OCI-LY7 (cell line): ENCODE measurements at regions of chrX and their contacts with region 1.

Region 1: GRCh38 chrX:119667111-119667878 is 25.7 kb downstream of the SEPTIN6 start:
- DNase-seq: no peak
- H3K4me3 ChIP-seq: no peak overlapping the region
- H3K27ac ChIP-seq: peak overlapping the region; percentile 85
- H3K4me1 ChIP-seq: peaks cover 40% of the 10 kb centered on the region
- CTCF ChIP-seq: no peak

Region 2: DNA sequence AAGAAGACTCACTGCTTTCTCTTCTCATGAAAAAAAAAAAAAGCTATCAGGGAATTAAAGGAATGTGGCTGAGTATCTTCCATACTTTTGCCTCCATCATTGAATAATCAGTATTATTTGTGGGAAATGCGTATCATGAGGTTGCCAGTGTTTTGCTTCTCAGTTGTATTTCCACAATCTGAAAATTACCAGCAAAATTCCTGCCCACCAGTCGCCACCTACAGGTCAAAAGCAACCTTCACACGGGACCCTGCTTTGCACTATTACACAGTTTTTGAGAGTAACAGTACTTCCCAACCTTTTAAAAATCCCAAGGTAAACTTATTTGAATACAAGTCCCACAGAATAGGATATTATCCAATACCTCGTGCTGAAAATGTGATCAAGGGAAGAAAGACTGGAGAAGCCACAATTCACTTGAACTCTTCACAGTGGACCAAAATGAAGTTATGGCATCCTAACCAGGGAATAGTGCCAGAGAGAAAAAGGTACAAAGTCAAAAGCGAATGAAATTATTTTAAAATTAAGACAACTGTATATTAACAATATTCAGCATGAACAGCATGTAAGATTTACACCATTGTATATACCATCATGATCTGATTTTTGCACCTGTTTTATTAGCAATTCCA is 400.8 kb before region 1 on chrX:
- CTCF ChIA-PET with region 1: no interaction called
- POLR2A ChIA-PET with region 1: no interaction called
- intact Hi-C with region 1: no loop called
- DNase-seq: peak; percentile 21
- H3K4me3 ChIP-seq: no peak overlapping the region
- H3K27ac ChIP-seq: no peak overlapping the region
- H3K4me1 ChIP-seq: no peaks in the 10 kb centered on the region
- CTCF ChIP-seq: peak; percentile 85

Region 3: DNA sequence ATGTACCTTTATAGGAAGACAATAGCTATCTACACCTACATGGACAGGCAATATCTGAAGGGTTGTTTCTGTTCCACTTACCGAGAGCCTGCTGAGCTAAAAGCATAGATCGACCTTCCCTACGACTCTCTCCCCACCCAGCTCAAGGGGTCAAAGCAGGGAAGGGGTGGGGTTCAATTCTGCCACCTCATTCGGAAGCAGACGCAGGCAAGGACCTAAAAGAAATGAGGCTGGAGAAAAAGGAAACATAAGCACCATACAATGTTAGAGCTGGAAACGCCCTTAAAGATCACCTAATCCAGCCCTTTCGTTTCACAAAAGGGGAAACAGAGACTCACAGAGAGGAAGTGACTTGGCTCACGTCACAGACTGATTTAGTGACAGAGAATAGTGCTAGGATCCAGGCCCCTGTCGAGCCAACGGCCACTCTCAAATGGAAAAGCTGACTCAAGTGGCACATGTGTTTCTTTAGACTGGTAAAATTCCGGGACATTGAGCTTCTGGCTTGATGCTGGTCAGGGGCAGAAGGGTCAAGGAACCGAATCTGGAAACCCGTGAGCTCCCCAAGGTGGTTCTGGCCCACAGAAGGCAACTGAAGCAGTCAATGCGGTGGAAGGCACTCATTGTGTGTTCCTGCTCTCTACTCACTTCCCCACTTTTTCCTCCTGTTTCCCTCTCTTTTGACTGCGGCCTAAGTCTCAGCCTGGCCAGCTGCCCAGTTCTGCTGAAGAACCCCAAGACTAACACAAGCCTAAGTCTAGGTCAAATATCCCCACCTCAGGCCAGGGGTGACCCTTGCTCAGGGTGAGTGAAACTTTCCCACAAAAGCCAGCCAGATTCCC is 18.2 kb after region 1 on chrX:
- CTCF ChIA-PET with region 1: interaction called, 6 read pairs
- POLR2A ChIA-PET with region 1: interaction called, 12 read pairs
- intact Hi-C with region 1: no loop called
- DNase-seq: peak; percentile 75
- H3K4me3 ChIP-seq: peak overlapping the region; percentile 63
- H3K27ac ChIP-seq: peak overlapping the region; percentile 100
- H3K4me1 ChIP-seq: peaks cover 97% of the 10 kb centered on the region
- CTCF ChIP-seq: no peak

Region 4: DNA sequence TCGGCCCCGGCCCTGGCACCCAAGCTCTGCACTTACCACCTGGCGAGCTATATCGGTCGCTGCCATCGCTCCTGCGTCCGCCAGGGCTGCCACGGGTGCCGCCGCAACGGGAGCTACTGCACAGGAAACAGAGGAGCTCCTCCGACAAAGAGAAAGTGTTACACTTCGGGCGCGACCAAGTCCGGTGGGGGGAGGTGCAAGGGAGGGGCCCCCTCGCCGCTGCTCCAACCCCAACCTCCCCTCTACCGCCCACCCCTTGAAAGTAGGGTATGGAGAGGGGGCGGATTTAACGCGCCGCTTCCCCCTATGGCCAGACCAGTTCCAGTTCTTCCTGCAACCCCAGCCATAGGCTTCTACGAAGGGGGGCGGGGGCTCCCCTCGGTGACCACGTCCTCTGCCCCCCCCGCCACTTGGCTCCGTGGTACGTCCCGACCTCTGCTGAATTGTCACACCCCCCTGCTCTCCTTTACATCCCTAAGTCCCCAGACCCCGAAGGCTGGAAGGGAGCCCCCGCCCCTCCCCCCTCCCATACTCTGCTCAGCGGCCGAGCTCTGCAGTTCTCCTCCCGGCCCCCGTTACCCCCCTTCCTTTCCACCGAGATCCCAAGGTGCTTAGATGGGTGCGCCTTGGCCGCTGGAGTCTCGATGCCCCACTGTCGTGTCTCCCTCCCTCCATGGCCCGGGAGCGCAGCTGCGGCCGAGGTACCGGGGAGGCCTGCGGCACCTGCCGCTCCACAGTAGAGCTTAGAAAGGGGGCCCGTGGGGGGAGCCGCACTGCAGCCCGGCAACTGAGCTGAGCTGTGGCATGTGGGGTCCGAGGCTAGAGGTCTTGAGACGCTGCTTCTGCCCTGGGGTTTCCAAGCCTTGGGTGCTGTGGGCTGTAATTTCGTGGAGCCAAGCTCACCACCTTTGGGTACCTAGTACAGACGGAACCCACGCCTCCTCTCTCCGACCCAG is 26.0 kb after region 1 on chrX and contains the start of gene SEPTIN6:
- CTCF ChIA-PET with region 1: interaction called, 6 read pairs
- POLR2A ChIA-PET with region 1: interaction called, 9 read pairs
- intact Hi-C with region 1: loop called (anchors 2 kb)
- DNase-seq: peak; percentile 90
- H3K4me3 ChIP-seq: peak within 1 kb of the TSS; percentile 94
- H3K27ac ChIP-seq: peak within 1 kb of the TSS; percentile 73
- H3K4me1 ChIP-seq: peaks cover 66% of the 10 kb centered on the region
- CTCF ChIP-seq: no peak
- total RNA-seq, gene SEPTIN6: 145 and 182 TPM in 2 replicates

Region 5: GRCh38 chrX:119833905-119834304 is 166.6 kb after region 1 on chrX:
- CTCF ChIA-PET with region 1: no interaction called
- POLR2A ChIA-PET with region 1: no interaction called
- intact Hi-C with region 1: no loop called
- DNase-seq: no peak
- H3K4me3 ChIP-seq: no peak overlapping the region
- H3K27ac ChIP-seq: no peak overlapping the region
- H3K4me1 ChIP-seq: no peaks in the 10 kb centered on the region
- CTCF ChIP-seq: no peak